ENCODE measurements at regions of chr12 and their contacts with region 1.

Region 1: GRCh38 chr12:65756956-65757511 is 67.2 kb upstream of the HMGA2 start:
- DNase-seq: peak; percentile 55
- ATAC-seq: peak; percentile 98
- H3K4me3 Mint-ChIP-seq: no peak overlapping the region
- H3K27ac Mint-ChIP-seq: peak overlapping the region; percentile 64
- H3K4me1 Mint-ChIP-seq: peaks cover 15% of the 10 kb centered on the region
- H3K27me3 Mint-ChIP-seq: peaks cover 21% of the 10 kb centered on the region

Region 2: GRCh38 chr12:65715961-65716360 is 41.1 kb before region 1 on chr12:
- CTCF ChIA-PET with region 1: no interaction called
- POLR2A ChIA-PET with region 1: no interaction called
- intact Hi-C with region 1: no loop called
- DNase-seq: no peak
- ATAC-seq: no peak
- H3K4me3 Mint-ChIP-seq: no peak overlapping the region
- H3K27ac Mint-ChIP-seq: no peak overlapping the region
- H3K4me1 Mint-ChIP-seq: no peaks in the 10 kb centered on the region
- H3K27me3 Mint-ChIP-seq: peaks cover 24% of the 10 kb centered on the region

Region 3: GRCh38 chr12:65740873-65741600 is 16.0 kb before region 1 on chr12:
- CTCF ChIA-PET with region 1: no interaction called
- POLR2A ChIA-PET with region 1: no interaction called
- intact Hi-C with region 1: loop called in 1 of 2 experiments (anchors 2 kb)
- DNase-seq: peak; percentile 85
- ATAC-seq: peak; percentile 86
- H3K4me3 Mint-ChIP-seq: peak overlapping the region; percentile 67
- H3K27ac Mint-ChIP-seq: peak overlapping the region; percentile 78
- H3K4me1 Mint-ChIP-seq: peaks cover 11% of the 10 kb centered on the region
- H3K27me3 Mint-ChIP-seq: peaks cover 30% of the 10 kb centered on the region

Region 4: GRCh38 chr12:65952737-65953209 is 195.7 kb after region 1 on chr12:
- CTCF ChIA-PET with region 1: no interaction called
- POLR2A ChIA-PET with region 1: no interaction called
- intact Hi-C with region 1: loop called in 1 of 2 experiments (anchors 2 kb)
- DNase-seq: peak; percentile 10
- ATAC-seq: peak; percentile 100
- H3K4me3 Mint-ChIP-seq: no peak overlapping the region
- H3K27ac Mint-ChIP-seq: no peak overlapping the region
- H3K4me1 Mint-ChIP-seq: peaks cover 12% of the 10 kb centered on the region
- H3K27me3 Mint-ChIP-seq: peaks cover 8% of the 10 kb centered on the region

Region 5: DNA sequence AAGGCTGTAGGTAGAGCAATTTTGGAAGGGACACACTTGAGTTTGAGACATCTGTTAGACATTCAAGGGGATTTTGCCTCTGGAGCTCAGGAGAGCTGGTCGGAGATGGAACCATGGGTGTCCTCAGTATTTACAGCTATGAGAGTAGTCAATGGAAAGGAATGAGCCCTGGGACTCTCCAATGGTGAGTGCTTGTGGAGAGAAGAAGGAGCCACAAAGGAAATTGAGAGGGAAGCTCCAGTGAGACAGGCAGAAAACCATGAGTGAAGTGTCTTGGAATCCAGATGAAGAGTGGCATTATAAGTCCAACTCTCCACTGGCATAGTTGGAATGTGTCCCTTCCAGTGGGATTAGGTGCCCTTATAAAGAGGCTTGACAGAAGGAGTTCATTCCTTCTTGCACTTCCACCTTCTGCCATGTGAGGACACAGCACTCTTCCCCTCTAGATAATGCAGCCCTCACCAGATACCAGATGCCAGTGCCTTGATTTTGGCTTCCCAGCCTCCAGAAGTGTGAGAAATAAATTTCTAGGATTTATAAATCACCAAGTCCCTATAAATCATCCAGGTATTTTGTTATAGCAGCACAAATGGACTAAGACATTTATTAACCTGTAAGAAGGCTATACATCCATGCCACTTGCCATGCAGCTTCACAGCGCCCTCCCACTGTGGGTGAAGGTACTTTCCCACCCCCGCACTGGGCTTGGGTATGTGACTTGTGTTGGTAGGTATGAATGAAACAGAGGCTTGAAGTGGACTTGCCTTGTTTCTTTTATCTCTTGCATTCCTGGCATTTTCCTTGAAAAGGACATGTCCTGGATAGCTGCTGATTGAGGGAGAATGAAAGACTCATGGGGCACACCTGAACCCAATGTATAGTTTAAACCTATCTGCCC is 346.2 kb after region 1 on chr12:
- CTCF ChIA-PET with region 1: no interaction called
- POLR2A ChIA-PET with region 1: no interaction called
- intact Hi-C with region 1: no loop called
- DNase-seq: peak; percentile 42
- ATAC-seq: no peak
- H3K4me3 Mint-ChIP-seq: no peak overlapping the region
- H3K27ac Mint-ChIP-seq: no peak overlapping the region
- H3K4me1 Mint-ChIP-seq: peaks cover 2% of the 10 kb centered on the region
- H3K27me3 Mint-ChIP-seq: peaks cover 31% of the 10 kb centered on the region